Activated T-helper 2 cell treated with anti-CD3 and anti-CD28 coated beads, Interferon-gamma antibody, Interleukin-2, Interleukin-4, amounts not matched to agents 10 μg/mL and 5 μg/mL and 100 μg/mL, durations not matched to agents 14 hours and 24 hours and 36 hours (primary cell): ENCODE measurements at regions of chr2 and their contacts with region 1.

Region 1: GRCh38 chr2:191573216-191573615 is 104.7 kb upstream of the NABP1 start:
- DNase-seq: no peak
- H3K4me3 Mint-ChIP-seq: no peak overlapping the region
- H3K27ac Mint-ChIP-seq: no peak overlapping the region
- H3K4me1 Mint-ChIP-seq: peaks cover 36% of the 10 kb centered on the region
- H3K27me3 Mint-ChIP-seq: peaks cover 32% of the 10 kb centered on the region

Region 2: GRCh38 chr2:191593622-191594416 is 20.6 kb after region 1 on chr2:
- intact Hi-C with region 1: no loop called
- DNase-seq: no peak
- H3K4me3 Mint-ChIP-seq: no peak overlapping the region
- H3K27ac Mint-ChIP-seq: no peak overlapping the region
- H3K4me1 Mint-ChIP-seq: no peaks in the 10 kb centered on the region
- H3K27me3 Mint-ChIP-seq: peaks cover 17% of the 10 kb centered on the region

Region 3: DNA sequence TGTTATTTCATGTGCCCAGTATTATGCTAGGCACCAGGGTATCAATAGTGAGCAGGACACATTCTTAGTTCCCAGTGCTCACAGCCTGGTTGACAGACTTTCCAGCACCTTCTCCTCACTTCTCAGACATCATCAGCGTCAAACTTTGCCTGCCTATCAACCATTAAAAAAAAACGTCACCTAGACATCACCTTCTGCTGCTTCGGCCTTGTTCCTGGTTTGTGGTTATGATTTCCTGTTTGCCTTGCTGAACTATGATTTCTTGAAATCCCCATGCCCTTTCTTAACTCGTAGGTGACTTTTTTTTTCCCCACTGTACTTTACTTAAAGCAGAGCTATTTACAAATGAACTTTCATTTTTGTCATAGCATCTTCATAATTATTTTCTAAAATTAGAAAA is 44.4 kb after region 1 on chr2:
- intact Hi-C with region 1: loop called (anchors 1 kb)
- DNase-seq: peak; percentile 55
- H3K4me3 Mint-ChIP-seq: no peak overlapping the region
- H3K27ac Mint-ChIP-seq: peak overlapping the region; percentile 79
- H3K4me1 Mint-ChIP-seq: peaks cover 46% of the 10 kb centered on the region
- H3K27me3 Mint-ChIP-seq: no peaks in the 10 kb centered on the region

Region 4: GRCh38 chr2:191642541-191642940 is 69.3 kb after region 1 on chr2:
- intact Hi-C with region 1: loop called (anchors 1 kb)
- DNase-seq: no peak
- H3K4me3 Mint-ChIP-seq: no peak overlapping the region
- H3K27ac Mint-ChIP-seq: peak overlapping the region; percentile 63
- H3K4me1 Mint-ChIP-seq: peaks cover 37% of the 10 kb centered on the region
- H3K27me3 Mint-ChIP-seq: peaks cover 8% of the 10 kb centered on the region